Head of caudate nucleus (tissue), 42 donors: ENCODE measurements at regions of chr2 and their contacts with region 1.

Region 1: GRCh38 chr2:230864598-230865306 is at the start of gene ITM2C:
- DNase-seq: peak in 41 of 42 donors; percentile 43 to 90 (median 78)

Region 2: DNA sequence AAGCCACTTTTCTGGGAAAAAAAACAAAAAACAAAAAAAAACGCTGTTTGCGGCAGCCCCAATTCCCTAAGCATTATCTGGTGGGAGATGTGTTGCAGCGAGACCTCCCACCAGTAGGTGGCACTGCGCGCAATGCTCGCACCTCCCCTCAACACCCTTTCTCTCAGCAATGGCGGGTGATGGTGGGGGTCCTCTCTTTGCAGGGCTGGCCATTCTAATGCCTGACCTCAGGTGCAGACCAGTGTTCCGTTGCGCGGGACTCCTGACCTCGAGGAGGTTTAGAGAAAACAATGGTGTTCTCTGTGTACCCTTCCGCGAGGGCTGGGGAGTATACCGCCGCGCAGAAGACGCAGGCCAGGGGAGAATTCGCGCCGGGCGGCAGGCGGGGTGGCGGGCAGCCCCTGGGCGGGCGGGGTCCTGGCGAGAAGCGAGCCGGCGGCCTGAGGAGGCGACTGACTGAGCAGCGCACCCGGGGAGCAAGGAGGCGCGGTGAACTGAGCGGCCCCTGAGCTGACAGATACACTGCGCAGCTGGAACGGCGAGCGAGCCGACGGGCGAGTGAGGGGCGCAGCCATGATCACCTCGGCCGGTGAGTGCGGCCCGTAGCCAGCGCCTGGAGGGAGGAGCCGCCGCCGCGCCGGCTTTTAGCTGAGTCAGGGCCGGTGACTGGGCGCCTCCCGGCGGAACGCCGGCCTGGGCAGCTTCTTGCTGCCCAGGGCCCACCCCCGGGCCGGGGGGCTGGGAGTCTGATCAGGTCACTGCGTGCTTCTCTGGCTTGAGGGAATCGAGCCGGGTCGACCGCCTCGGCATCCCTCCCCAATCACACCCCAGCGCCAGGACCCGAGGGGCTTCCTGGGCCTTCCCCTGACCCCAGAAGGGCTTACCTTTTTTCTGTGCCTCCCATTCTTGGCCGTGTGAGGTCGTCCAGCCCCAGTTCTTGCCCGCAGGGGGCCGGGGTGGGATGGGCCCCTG is 192.0 kb after region 1 on chr2 and contains the start of gene PSMD1:
- intact Hi-C with region 1: loop called (anchors 10 kb)
- DNase-seq: peak; percentile 86 to 98 (median 94)